Activated CD4-positive, alpha-beta T cell treated with anti-CD3 and anti-CD28 coated beads for 36 hours (primary cell): ENCODE measurements at regions of chr6 and their contacts with region 1.

Region 1: DNA sequence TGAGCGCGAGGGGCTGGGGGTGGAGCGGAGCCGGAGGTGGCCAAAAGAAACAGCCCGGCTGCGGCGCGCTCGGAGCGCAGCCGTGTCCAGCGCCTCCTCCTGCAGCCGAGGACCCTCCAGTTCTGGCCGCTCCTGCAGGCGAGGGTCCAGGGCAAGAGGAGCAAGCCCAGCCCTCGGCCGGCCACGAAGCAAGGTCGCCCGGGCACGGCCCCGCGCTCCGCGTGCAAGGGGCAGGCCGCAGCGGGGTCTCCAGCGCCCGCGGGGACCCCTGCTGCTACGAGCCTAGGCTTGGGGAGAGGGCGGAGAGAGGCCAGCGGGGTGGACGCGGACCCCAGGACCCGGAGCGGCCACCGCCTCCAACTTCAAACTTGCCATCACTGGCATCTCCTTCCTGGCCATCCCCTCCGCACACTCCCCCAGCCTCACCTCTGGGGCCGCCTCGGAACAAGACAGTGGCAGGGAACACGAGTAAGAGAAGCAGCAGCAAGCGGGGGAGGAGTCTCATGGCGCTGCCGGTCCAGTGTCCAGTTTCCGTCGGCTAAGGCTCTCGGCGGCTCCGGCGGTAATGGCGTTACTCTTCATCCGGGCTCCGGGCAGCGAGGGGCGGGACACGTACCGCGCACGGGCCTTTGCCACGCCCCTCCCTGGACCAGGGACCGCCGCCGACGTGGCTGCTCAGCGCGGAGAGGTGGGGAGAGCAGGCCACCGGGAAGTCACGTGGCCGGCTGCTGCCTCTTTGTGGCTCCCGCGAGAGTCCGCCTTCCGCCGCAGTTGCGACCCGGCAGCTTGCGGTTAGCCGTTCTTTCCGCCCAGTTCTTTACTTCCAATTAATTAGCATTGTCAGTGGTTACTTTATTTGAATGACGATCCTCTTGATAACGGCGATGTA is at the start of gene SSR1:
- DNase-seq: peak; percentile 97
- ATAC-seq: peak; percentile 97
- H3K4me3 Mint-ChIP-seq: peak within 1 kb of the TSS; percentile 99
- H3K27ac Mint-ChIP-seq: peak within 1 kb of the TSS; percentile 98
- H3K4me1 Mint-ChIP-seq: peaks cover 45% of the 10 kb centered on the region
- H3K27me3 Mint-ChIP-seq: no peaks in the 10 kb centered on the region
- total RNA-seq, gene SSR1: 129 to 165 TPM

Region 2: DNA sequence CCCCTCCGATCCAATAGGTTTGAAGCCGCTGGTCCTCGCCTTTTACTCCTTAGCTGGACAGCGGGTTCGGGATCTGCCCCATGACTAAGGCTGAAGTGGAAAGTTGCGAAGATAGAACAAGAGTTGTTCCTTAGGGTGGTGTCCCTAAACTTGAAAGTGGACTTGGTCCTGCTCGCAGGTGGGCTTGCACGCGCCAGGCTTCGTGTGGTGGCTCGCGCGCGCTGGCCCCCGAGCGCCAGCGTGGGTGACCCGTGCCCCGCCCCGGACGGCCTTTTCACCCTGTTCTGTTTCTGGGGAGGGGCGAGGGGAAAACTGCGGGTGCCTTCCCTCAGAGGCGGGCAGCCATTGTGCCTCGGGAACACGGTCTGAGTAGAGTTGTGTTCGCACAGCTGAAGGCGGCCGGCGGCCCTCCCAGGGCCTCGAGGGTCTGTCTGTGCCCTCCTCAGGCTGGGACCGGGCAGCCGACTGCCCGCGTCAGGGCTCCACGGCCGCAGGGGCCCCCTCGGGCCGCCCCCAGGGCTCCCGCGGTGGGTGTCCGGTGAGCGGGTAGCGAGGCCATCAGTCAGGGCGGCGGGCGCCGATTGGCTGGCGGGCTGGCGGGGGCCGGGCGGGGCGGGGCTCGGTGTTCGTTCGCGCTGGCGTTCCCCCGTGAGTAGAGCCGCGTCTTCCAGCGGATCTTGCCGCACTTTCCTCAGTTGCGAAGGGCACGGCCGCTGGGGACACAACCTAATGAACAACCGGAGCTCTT is 172.1 kb before region 1 on chr6:
- CTCF ChIA-PET with region 1: interaction called, 3 read pairs
- POLR2A ChIA-PET with region 1: no interaction called
- intact Hi-C with region 1: loop called in 1 of 2 experiments (anchors 2 kb)
- DNase-seq: peak; percentile 91
- ATAC-seq: peak; percentile 72
- H3K4me3 Mint-ChIP-seq: peak overlapping the region; percentile 72
- H3K27ac Mint-ChIP-seq: peak overlapping the region; percentile 85
- H3K4me1 Mint-ChIP-seq: peaks cover 82% of the 10 kb centered on the region
- H3K27me3 Mint-ChIP-seq: no peaks in the 10 kb centered on the region

Region 3: DNA sequence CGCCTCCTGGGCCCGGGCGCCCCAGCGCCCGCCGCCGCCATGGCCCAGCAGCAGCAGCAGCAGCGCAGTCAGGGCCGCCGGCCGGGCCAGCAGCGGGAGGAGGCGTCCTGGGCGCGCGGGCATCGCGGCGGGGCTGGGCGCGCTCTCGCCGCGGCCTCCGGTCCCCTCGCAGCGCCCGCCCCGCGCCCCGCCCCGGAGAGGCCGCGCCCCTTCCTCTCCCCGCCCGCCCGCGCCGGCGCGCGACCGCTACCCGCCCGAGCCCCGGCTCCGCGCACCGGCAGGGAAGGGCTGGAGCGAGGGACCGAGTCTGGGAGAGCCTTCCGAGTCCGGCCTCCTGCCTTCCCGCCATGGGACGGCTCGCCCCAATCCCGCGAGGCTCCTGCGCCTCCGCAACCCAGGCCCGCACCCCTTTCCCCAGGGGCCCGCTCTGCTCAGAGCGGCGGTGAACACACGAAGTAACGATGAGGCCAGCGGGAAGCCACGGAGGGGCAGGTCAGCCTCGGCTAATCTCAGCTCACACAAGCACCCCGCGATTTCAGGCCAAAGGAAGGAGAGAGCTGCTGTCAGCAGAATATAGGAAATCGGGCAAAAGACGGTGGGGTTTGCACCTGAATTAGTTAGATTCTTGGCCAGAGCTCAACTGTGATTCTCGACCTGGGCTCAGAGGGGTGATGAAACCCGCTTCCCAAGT is 597.9 kb after region 1 on chr6 and contains the start of gene TXNDC5:
- CTCF ChIA-PET with region 1: no interaction called
- POLR2A ChIA-PET with region 1: no interaction called
- intact Hi-C with region 1: loop called in 1 of 2 experiments (anchors 1 kb)
- DNase-seq: peak; percentile 83
- ATAC-seq: peak; percentile 87
- H3K4me3 Mint-ChIP-seq: peak within 1 kb of the TSS; percentile 91
- H3K27ac Mint-ChIP-seq: peak within 1 kb of the TSS; percentile 76
- H3K4me1 Mint-ChIP-seq: peaks cover 15% of the 10 kb centered on the region
- H3K27me3 Mint-ChIP-seq: no peaks in the 10 kb centered on the region
- total RNA-seq, gene TXNDC5: 44.4 to 52.8 TPM

Region 4: GRCh38 chr6:8435160-8435852 is 1122.4 kb after region 1 on chr6 and contains the start of gene SLC35B3:
- CTCF ChIA-PET with region 1: no interaction called
- POLR2A ChIA-PET with region 1: no interaction called
- intact Hi-C with region 1: loop called in 1 of 2 experiments (anchors 1 kb)
- DNase-seq: peak; percentile 99
- ATAC-seq: peak; percentile 95
- H3K4me3 Mint-ChIP-seq: peak within 1 kb of the TSS; percentile 92
- H3K27ac Mint-ChIP-seq: peak within 1 kb of the TSS; percentile 95
- H3K4me1 Mint-ChIP-seq: peaks cover 38% of the 10 kb centered on the region
- H3K27me3 Mint-ChIP-seq: no peaks in the 10 kb centered on the region
- total RNA-seq, gene SLC35B3: 4.9 to 6.7 TPM